Lower lobe of right lung (tissue), 2 donors: ENCODE measurements at regions of chr11 and their contacts with region 1.

Region 1: DNA sequence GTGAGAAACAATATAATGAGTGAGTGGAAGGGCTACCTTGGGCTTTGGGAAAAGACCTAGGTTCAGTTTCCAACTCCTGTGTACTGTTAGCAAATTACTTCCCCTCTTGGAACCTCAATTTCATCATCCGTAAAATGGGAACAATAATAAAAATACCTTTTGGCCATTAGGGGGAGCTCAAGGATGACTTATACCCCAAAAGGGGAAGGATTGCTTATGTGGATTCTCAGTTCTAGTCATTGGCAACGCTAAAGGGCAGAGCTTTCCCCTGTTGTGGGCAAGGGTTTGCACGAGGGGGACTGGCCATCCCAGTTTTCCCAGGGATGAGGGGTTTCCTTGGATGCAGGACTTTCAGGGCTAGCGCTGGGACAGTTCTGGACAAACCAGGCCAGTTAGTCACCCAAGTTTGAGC is 3.1 kb upstream of the COMMD9 start:
- DNase-seq: no peak
- ATAC-seq: peak; percentile 29 to 37
- H3K4me3 ChIP-seq: no peak overlapping the region
- H3K27ac ChIP-seq: no peak overlapping the region
- H3K4me1 ChIP-seq: peaks cover 19% of the 10 kb centered on the region
- H3K27me3 ChIP-seq: no peaks in the 10 kb centered on the region
- CTCF ChIP-seq: peak; percentile 55

Region 2: DNA sequence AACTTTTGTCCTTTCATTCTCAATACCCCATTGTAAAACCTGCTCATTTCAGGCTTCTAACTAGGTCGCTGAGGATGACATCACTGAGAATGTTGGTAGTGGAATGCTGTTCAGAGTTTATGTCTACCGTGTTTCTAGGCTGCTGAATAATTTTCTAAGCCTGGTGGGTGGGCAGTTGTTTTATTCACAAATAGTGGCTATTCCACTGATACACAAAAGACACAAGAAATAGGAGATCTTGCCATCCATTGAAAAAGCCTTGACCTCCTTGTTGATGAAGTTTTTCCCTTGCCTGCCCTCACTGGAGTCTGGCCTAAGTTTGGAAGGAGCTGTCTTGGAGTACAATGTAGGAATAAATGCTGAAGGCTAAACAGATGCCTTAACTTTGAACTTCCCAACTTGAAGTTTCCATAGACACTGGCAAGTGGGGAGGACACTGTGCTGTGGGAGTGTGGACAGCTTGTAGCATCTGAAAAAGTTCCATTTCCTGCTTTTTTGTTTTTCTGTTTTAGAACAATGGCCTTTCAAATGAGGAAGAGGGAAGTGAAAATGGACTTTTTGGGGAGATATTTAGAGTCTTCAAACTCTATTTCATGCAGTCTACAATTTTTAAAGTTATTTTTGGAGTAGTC is 570.5 kb before region 1 on chr11:
- intact Hi-C with region 1: no loop called
- DNase-seq: no peak
- ATAC-seq: no peak
- H3K4me3 ChIP-seq: no peak overlapping the region
- H3K27ac ChIP-seq: no peak overlapping the region
- H3K4me1 ChIP-seq: peaks cover 5% of the 10 kb centered on the region
- H3K27me3 ChIP-seq: no peaks in the 10 kb centered on the region
- CTCF ChIP-seq: no peak

Region 3: GRCh38 chr11:36492724-36493304 is 200.5 kb after region 1 on chr11:
- intact Hi-C with region 1: loop called (anchors 5 kb)
- DNase-seq: no peak
- ATAC-seq: peak; percentile 56 to 64
- H3K4me3 ChIP-seq: no peak overlapping the region
- H3K27ac ChIP-seq: no peak overlapping the region
- H3K4me1 ChIP-seq: peaks cover 5% of the 10 kb centered on the region
- H3K27me3 ChIP-seq: no peaks in the 10 kb centered on the region
- CTCF ChIP-seq: peak; percentile 73